ENCODE measurements at regions of chr5 and their contacts with region 1.

Region 1: DNA sequence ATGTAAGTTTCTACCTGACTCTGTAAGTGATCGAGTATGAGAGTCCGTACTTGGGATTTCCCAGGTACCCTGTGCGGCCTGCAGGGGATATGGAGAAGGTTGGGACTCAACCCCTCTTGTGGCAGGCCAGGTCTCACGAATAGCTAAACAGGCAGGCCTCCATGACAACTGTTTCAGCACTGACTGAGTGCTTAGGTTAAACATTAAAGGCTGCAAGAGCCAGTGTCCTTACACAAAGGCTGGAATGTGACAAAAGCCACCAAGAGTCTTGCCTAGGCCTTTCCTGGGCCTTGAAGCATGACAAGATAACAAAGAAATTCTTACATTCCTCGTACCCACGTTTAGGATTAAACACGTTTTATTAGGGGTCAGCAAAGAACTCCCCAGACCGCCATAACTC is 58.6 kb downstream of the THBS4 start:
- DNase-seq: no peak
- H3K4me3 Mint-ChIP-seq: no peak overlapping the region
- H3K27ac Mint-ChIP-seq: no peak overlapping the region
- H3K4me1 Mint-ChIP-seq: peaks cover 32% of the 10 kb centered on the region
- H3K27me3 Mint-ChIP-seq: no peaks in the 10 kb centered on the region

Region 2: GRCh38 chr5:80069918-80070318 is 23.9 kb before region 1 on chr5:
- CTCF ChIA-PET with region 1: no interaction called
- DNase-seq: no peak
- H3K4me3 Mint-ChIP-seq: no peak overlapping the region
- H3K27ac Mint-ChIP-seq: no peak overlapping the region
- H3K4me1 Mint-ChIP-seq: peaks cover 5% of the 10 kb centered on the region
- H3K27me3 Mint-ChIP-seq: no peaks in the 10 kb centered on the region

Region 3: GRCh38 chr5:80083101-80083890 is 10.5 kb before region 1 on chr5:
- CTCF ChIA-PET with region 1: interaction called, 10 read pairs
- DNase-seq: peak; percentile 29
- H3K4me3 Mint-ChIP-seq: peak overlapping the region; percentile 61
- H3K27ac Mint-ChIP-seq: peak overlapping the region; percentile 76
- H3K4me1 Mint-ChIP-seq: peaks cover 13% of the 10 kb centered on the region
- H3K27me3 Mint-ChIP-seq: peaks cover 3% of the 10 kb centered on the region

Region 4: GRCh38 chr5:80191991-80192398 is 98.2 kb after region 1 on chr5:
- CTCF ChIA-PET with region 1: interaction called, 13 read pairs
- DNase-seq: peak; percentile 81
- H3K4me3 Mint-ChIP-seq: peak overlapping the region; percentile 58
- H3K27ac Mint-ChIP-seq: peak overlapping the region; percentile 100
- H3K4me1 Mint-ChIP-seq: peaks cover 88% of the 10 kb centered on the region
- H3K27me3 Mint-ChIP-seq: no peaks in the 10 kb centered on the region

Region 5: DNA sequence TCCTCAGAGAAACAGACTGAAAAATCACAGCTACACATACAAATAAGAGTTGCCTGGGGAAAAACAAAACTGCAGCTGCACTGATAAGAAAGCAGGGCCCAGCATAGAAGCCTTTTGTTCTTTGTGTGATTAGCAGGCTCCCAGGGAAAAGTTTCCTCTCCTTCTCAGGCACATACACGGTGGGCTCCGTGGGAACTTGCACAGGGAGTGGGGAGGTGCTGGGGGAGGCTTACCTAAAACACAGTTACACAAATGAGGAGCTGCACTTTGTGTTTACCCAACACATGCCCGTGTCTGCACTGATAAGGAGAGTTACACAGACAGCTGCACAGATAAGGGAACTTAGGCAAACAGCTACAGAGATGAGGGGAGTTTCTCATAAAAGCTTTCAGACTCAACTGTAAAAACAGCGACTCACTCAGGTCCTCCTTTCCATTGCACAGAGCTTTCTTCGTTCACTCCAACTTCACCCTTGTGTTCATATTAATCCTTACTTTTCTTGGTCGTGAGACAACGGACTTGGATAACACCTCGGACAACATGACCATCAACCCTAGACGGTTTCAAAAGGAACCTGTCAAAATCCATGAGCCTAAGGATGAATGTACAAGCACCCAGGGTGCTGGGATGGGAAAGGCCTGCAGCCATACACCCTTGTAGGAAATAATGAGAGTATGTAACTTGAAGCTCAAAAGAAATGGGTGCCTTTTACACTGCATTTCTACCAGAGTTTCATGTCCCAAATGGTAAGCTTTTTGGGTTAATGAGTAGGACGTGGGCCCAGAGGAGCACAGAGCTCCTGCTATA is 111.2 kb after region 1 on chr5:
- CTCF ChIA-PET with region 1: interaction called, 12 read pairs
- DNase-seq: no peak
- H3K4me3 Mint-ChIP-seq: no peak overlapping the region
- H3K27ac Mint-ChIP-seq: peak overlapping the region; percentile 84
- H3K4me1 Mint-ChIP-seq: peaks cover 74% of the 10 kb centered on the region
- H3K27me3 Mint-ChIP-seq: no peaks in the 10 kb centered on the region

Region 6: GRCh38 chr5:80255732-80256479 is 162.1 kb after region 1 on chr5 and contains the start of gene SERINC5:
- CTCF ChIA-PET with region 1: interaction called, 12 read pairs
- DNase-seq: peak; percentile 90
- H3K4me3 Mint-ChIP-seq: peak within 1 kb of the TSS; percentile 92
- H3K27ac Mint-ChIP-seq: peak within 1 kb of the TSS; percentile 97
- H3K4me1 Mint-ChIP-seq: peaks cover 48% of the 10 kb centered on the region
- H3K27me3 Mint-ChIP-seq: peaks cover 3% of the 10 kb centered on the region

Region 7: GRCh38 chr5:80275347-80275746 is 181.6 kb after region 1 on chr5:
- CTCF ChIA-PET with region 1: interaction called, 47 read pairs
- DNase-seq: peak; percentile 47
- H3K4me3 Mint-ChIP-seq: no peak overlapping the region
- H3K27ac Mint-ChIP-seq: no peak overlapping the region
- H3K4me1 Mint-ChIP-seq: peaks cover 29% of the 10 kb centered on the region
- H3K27me3 Mint-ChIP-seq: no peaks in the 10 kb centered on the region

Region 8: GRCh38 chr5:80308526-80308925 is 214.7 kb after region 1 on chr5:
- CTCF ChIA-PET with region 1: interaction called, 103 read pairs
- DNase-seq: no peak
- H3K4me3 Mint-ChIP-seq: no peak overlapping the region
- H3K27ac Mint-ChIP-seq: no peak overlapping the region
- H3K4me1 Mint-ChIP-seq: peaks cover 2% of the 10 kb centered on the region
- H3K27me3 Mint-ChIP-seq: peaks cover 6% of the 10 kb centered on the region